Naive thymus-derived CD4-positive, alpha-beta T cell (primary cell): ENCODE measurements at regions of chr4 and their contacts with region 1.

Region 1: GRCh38 chr4:152255437-152256011 is 280.4 kb downstream of the FBXW7 start:
- DNase-seq: peak in 8 of 9 donors; percentile 44 to 64 (median 58)
- ATAC-seq: peak; percentile 89
- H3K4me3 ChIP-seq: no peak overlapping the region
- H3K4me3 Mint-ChIP-seq: no peak overlapping the region
- H3K27ac ChIP-seq: peak overlapping the region; percentile 36
- H3K27ac Mint-ChIP-seq: no peak overlapping the region
- H3K4me1 ChIP-seq: peaks cover 37 to 45% of the 10 kb centered on the region in 2 donors
- H3K4me1 Mint-ChIP-seq: peaks cover 0 to 17% (median 11%) of the 10 kb centered on the region in 7 donors
- H3K27me3 ChIP-seq: no peaks in the 10 kb centered on the region
- H3K27me3 Mint-ChIP-seq: peaks cover 0 to 2% (median 0%) of the 10 kb centered on the region in 5 donors

Region 2: DNA sequence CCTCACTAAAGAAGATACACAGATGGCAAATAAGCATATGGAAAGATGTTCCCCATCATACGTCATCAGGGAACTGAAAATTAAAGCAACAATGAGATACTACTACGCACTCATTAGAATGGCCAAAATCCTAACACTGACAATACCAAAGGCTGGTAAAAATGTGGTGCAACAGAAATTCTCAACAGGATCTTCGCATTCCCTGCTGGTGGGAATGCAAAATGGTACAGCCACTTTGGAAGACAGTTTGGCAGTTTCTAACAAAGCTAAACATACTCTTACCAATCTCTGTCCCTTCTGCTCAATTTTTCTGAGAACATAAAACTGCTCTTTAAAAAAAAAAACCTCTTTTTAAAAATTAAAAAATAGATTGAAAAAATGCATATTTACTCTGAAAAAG is 19.8 kb before region 1 on chr4:
- CTCF ChIA-PET with region 1: no interaction called
- POLR2A ChIA-PET with region 1: interaction called, 3 read pairs
- intact Hi-C with region 1: loop called in 1 of 2 experiments (anchors 2 kb)
- DNase-seq: no peak
- ATAC-seq: no peak
- H3K4me3 ChIP-seq: no peak overlapping the region
- H3K4me3 Mint-ChIP-seq: no peak overlapping the region
- H3K27ac ChIP-seq: no peak overlapping the region
- H3K27ac Mint-ChIP-seq: no peak overlapping the region
- H3K4me1 ChIP-seq: no peaks in the 10 kb centered on the region
- H3K4me1 Mint-ChIP-seq: peaks cover 0 to 12% (median 4%) of the 10 kb centered on the region in 7 donors
- H3K27me3 ChIP-seq: no peaks in the 10 kb centered on the region
- H3K27me3 Mint-ChIP-seq: peaks cover 0 to 6% (median 0%) of the 10 kb centered on the region in 5 donors

Region 3: DNA sequence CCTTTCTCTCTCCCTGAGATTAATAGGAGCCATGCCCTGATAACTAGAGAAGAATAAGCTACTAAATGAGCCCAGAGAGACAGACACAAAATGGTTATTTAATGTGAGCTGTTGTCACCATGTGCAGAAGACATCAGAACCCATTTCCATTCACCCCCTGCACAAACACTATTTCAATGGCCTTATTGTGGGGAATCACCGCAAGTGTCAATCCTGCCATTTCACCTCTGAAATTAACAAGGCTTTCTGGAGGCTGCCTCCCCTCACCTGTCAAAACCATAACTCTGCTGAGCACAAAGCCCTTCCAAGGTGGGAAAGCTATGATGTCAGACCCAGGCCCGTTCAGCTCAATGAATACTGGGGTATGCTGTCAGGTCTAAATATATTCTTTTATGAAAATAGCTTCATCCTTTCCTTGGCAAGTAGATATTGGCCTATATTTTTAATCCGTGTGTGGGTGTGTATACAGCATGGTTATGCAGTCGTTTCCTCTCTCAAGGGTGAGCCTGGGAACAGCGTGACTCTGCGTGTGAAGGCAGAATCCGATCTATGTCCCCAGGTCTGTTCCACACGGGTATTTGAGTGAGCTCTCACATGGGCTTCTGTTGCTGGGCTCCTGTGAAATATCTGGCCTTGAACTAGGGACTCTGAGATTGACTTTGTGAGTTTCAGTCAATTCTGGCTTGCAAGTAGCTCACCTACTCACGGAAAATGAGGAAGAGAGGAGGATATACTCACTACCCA is 14.1 kb after region 1 on chr4:
- CTCF ChIA-PET with region 1: no interaction called
- POLR2A ChIA-PET with region 1: interaction called, 11 read pairs
- intact Hi-C with region 1: no loop called
- DNase-seq: no peak
- ATAC-seq: no peak
- H3K4me3 ChIP-seq: no peak overlapping the region
- H3K4me3 Mint-ChIP-seq: no peak overlapping the region
- H3K27ac ChIP-seq: no peak overlapping the region
- H3K27ac Mint-ChIP-seq: no peak overlapping the region
- H3K4me1 ChIP-seq: no peaks in the 10 kb centered on the region
- H3K4me1 Mint-ChIP-seq: peaks cover 4 to 21% (median 8%) of the 10 kb centered on the region in 7 donors
- H3K27me3 ChIP-seq: no peaks in the 10 kb centered on the region
- H3K27me3 Mint-ChIP-seq: no peaks in the 10 kb centered on the region

Region 4: DNA sequence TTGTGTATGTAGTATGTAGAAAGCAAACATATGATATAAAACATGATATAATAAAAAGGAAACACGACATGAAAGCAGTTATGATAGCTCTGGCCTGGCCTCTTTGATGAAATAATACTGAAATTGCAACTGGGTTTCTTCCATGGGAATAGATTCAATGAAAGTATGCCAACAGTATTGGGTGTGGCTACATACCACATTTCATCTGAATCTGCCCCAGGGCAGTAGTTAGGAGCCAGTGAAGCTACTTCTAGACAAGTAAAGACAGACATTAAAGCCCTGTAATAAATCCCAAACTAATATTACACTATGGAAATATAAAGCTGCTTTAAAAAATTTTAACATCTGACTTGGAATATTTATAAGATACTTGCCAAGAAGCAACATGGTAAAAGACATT is 73.1 kb after region 1 on chr4:
- CTCF ChIA-PET with region 1: no interaction called
- POLR2A ChIA-PET with region 1: interaction called, 4 read pairs
- intact Hi-C with region 1: loop called in 1 of 2 experiments (anchors 5 kb)
- DNase-seq: no peak
- ATAC-seq: no peak
- H3K4me3 ChIP-seq: no peak overlapping the region
- H3K4me3 Mint-ChIP-seq: no peak overlapping the region
- H3K27ac ChIP-seq: no peak overlapping the region
- H3K27ac Mint-ChIP-seq: peak overlapping the region in 2 of 9 donors; percentile 75 to 76
- H3K4me1 ChIP-seq: peaks cover 0 to 13% of the 10 kb centered on the region in 2 donors
- H3K4me1 Mint-ChIP-seq: peaks cover 6 to 24% (median 21%) of the 10 kb centered on the region in 7 donors
- H3K27me3 ChIP-seq: no peaks in the 10 kb centered on the region
- H3K27me3 Mint-ChIP-seq: no peaks in the 10 kb centered on the region